ENCODE measurements at regions of chr2 and their contacts with region 1.

Region 1: DNA sequence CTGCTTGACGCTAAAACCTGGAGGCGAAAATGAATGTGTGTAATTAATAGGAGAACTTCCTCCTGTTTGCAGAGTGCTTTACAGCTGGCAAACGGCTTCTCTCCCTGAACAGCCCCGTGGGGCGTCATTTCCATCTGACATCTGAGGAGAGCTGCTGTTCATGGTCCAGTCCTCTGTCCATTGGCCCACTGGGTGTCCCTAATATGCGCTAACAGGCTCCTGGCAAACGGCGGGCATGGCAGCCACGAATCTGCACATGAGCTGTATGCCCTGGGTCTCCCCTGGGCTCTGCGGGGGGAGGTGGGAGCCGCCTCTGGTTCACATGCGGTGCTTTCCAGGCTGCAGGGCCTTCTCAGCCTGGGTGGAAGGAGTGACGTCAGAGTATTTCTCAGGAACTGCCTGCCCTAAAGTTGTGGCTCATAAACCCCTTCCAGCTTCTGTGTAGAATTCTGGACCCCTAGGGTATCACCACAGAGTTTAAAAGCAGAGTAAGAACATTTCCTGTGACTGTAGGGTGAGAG is 73.2 kb downstream of the LRRFIP1 start:
- DNase-seq: peak; percentile 88

Region 2: GRCh38 chr2:237662671-237663093 is 37.9 kb before region 1 on chr2:
- intact Hi-C with region 1: loop called in 1 of 2 experiments (anchors 5 kb)
- DNase-seq: peak; percentile 95

Region 3: GRCh38 chr2:237739101-237739500 is 38.5 kb after region 1 on chr2:
- intact Hi-C with region 1: loop called in 1 of 2 experiments (anchors 5 kb)
- DNase-seq: peak; percentile 89